Tibial artery (tissue), 4 donors: ENCODE measurements at regions of chr7 and their contacts with region 1.

Region 1: GRCh38 chr7:97027427-97028234 is 3.0 kb upstream of the DLX5 start:
- DNase-seq: peak; percentile 79 to 85
- H3K4me3 ChIP-seq: peak overlapping the region; percentile 29 to 47
- H3K27ac ChIP-seq: no peak overlapping the region
- H3K4me1 ChIP-seq: peaks cover 0 to 40% (median 13%) of the 10 kb centered on the region in 4 donors
- H3K27me3 ChIP-seq: peaks cover 0 to 43% of the 10 kb centered on the region in 2 donors
- CTCF ChIP-seq: peak; percentile 86 to 89

Region 2: GRCh38 chr7:95916573-95917297 is 1110.9 kb before region 1 on chr7:
- intact Hi-C with region 1: loop called (anchors 5 kb)
- DNase-seq: peak; percentile 80 to 83
- H3K4me3 ChIP-seq: peak overlapping the region; percentile 7 to 12
- H3K27ac ChIP-seq: no peak overlapping the region
- H3K4me1 ChIP-seq: no peaks in the 10 kb centered on the region
- H3K27me3 ChIP-seq: no peaks in the 10 kb centered on the region
- CTCF ChIP-seq: peak; percentile 85 to 88

Region 3: DNA sequence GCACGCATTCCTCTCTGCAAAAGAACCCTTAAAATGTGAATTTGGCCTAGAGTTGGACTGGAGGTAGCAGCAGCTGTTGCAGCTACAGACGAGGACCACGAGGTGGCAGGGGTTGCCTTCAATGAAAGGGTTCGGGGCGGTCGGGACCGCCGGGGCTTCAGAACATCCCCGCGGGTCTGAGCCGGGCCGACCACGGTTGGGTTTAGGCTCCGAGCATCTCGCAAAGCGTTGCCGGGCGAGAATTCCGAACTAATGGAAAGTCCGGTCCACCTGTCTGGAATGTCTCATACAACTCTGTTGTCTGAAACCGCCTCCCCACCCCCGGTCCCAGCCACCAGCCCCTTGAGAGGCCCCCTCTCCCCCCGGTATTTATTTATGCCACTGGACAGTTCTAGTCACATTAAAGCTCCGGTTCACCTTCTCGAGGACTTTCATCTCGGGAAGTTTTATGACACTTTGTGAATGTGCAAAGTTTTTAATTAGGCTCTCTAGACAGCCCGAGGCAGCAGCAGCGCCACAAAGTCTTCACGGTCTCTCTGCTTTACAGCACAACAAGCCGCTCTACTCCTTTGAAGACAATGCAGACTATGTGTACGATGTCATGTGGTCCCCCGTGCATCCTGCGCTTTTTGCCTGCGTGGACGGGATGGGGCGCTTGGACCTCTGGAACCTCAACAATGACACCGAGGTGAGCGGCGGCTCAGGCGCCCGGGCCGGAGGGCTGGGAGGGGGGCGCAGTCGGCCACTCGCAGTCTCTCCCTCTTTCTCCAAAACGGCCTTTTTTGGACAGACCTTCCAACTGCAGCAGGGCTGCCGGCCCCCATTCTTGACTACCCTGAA is 951.9 kb before region 1 on chr7:
- intact Hi-C with region 1: loop called (anchors 5 kb)
- DNase-seq: peak; percentile 47 to 70
- H3K4me3 ChIP-seq: peak overlapping the region; percentile 48 to 61
- H3K27ac ChIP-seq: no peak overlapping the region
- H3K4me1 ChIP-seq: peaks cover 0 to 11% (median 3%) of the 10 kb centered on the region in 4 donors
- H3K27me3 ChIP-seq: no peaks in the 10 kb centered on the region
- CTCF ChIP-seq: peak; percentile 66 to 81

Region 4: DNA sequence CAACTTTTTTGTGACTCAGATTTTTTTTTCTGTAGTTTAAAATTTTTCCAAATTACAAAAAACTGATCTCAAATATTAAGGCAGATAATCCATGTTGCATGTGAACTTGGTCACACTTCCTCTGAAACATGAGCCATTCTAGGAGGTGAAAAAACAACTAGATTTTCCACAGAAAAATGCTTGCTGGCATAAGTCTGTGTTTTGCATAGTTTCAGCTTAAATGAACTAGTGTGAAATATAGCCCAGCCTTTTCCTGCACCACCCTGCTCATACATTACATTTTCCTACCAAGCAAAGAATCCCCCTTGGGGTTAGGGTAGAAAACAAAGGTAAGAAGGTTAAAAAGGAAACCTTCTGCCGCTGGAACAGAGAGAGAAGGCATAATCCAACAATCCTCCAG is 753.9 kb before region 1 on chr7:
- intact Hi-C with region 1: no loop called
- DNase-seq: no peak
- H3K4me3 ChIP-seq: no peak overlapping the region
- H3K27ac ChIP-seq: no peak overlapping the region
- H3K4me1 ChIP-seq: peaks cover 0 to 5% (median 0%) of the 10 kb centered on the region in 4 donors
- H3K27me3 ChIP-seq: no peaks in the 10 kb centered on the region
- CTCF ChIP-seq: no peak

Region 5: DNA sequence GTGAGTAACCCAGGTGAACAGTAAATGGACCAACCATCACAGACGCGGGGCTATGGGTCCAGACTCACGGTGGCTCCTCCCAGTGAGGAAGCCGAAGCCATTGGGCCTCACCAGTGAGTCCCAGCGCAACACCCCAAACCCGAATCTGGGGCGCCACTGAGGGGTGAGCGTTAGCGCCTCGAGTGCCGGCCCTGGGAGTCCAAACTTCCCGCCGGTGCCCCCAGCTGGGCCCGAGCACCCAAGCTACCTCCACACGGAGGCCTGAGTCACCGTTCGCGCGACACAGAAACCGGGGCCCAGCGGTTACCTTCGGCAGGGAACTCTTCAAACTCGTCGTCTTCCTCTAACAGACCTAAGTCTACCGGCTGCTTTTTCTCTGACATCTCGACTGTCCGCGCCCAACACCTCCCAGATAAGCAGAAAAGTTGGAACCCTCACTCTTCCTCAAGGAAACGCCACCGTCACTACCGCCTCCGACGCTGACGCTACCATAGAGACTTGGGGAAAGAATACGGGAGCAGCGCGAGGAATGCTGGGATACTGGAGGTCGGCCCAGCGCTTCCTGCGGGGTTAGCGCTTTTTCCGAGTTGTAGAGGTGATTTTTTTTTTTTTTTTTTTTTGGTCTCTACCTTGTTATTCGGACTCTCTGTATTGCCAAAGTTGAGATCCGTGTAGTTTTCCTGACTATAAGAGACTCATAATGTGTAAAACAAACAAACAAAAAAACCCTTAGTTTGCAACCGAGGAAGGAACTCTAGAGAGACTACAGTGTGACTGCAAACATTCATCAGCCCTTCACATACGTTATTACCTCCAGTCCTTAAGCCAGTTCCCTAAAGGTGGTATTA is 318.0 kb before region 1 on chr7 and contains the start of gene SEM1:
- intact Hi-C with region 1: loop called (anchors 10 kb)
- DNase-seq: peak; percentile 88 to 91
- H3K4me3 ChIP-seq: peak within 1 kb of the TSS; percentile 66 to 83
- H3K27ac ChIP-seq: peak within 1 kb of the TSS; percentile 83 to 90
- H3K4me1 ChIP-seq: peaks cover 0 to 34% (median 24%) of the 10 kb centered on the region in 4 donors
- H3K27me3 ChIP-seq: no peaks in the 10 kb centered on the region
- CTCF ChIP-seq: no peak

Region 6: GRCh38 chr7:97204821-97205220 is 177.2 kb after region 1 on chr7:
- intact Hi-C with region 1: no loop called
- DNase-seq: no peak
- H3K4me3 ChIP-seq: no peak overlapping the region
- H3K27ac ChIP-seq: no peak overlapping the region
- H3K4me1 ChIP-seq: no peaks in the 10 kb centered on the region
- H3K27me3 ChIP-seq: no peaks in the 10 kb centered on the region
- CTCF ChIP-seq: no peak